BJ (cell line): ENCODE measurements at regions of chrX and their contacts with region 1.

Region 1: GRCh38 chrX:155179346-155179986 is 36.8 kb upstream of the VBP1 start:
- DNase-seq: no peak
- H3K4me3 ChIP-seq: no peak overlapping the region
- H3K27me3 ChIP-seq: no peaks in the 10 kb centered on the region
- CTCF ChIP-seq: no peak

Region 2: GRCh38 chrX:154961947-154962346 is 217.5 kb before region 1 on chrX:
- CTCF ChIA-PET with region 1: no interaction called
- POLR2A ChIA-PET with region 1: no interaction called
- DNase-seq: no peak
- H3K4me3 ChIP-seq: no peak overlapping the region
- H3K27me3 ChIP-seq: no peaks in the 10 kb centered on the region
- CTCF ChIP-seq: no peak

Region 3: DNA sequence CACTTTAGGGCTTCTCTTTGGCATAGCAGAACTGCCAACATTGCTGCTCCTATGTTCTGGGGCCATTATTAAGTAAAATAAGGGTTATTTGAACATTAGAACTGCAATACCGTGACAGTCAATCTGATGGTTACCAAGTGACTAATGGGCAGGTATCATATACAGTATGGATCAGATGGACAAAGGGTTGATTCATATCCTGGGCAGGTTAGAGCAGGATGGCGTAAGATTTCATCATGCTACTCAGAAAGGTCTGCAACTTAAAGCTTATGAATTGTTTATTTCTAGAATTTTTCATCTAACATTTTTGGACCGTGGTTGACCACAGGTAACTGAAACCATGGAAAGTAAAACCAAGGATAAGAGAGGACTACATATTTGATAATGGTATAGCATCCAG is 67.3 kb before region 1 on chrX:
- CTCF ChIA-PET with region 1: no interaction called
- POLR2A ChIA-PET with region 1: no interaction called
- DNase-seq: no peak
- H3K4me3 ChIP-seq: no peak overlapping the region
- H3K27me3 ChIP-seq: no peaks in the 10 kb centered on the region
- CTCF ChIP-seq: no peak

Region 4: GRCh38 chrX:155216179-155216939 is 36.9 kb after region 1 on chrX and contains the start of gene VBP1:
- CTCF ChIA-PET with region 1: no interaction called
- POLR2A ChIA-PET with region 1: interaction called, 11 read pairs
- DNase-seq: peak; percentile 77
- H3K4me3 ChIP-seq: peak within 1 kb of the TSS; percentile 85
- H3K27me3 ChIP-seq: no peaks in the 10 kb centered on the region
- CTCF ChIP-seq: peak; percentile 39
- polyA plus RNA-seq, gene VBP1: 11.3 and 30.7 TPM in 2 replicates